SK-N-SH (cell line): ENCODE measurements at regions of chr6 and their contacts with region 1.

Region 1: DNA sequence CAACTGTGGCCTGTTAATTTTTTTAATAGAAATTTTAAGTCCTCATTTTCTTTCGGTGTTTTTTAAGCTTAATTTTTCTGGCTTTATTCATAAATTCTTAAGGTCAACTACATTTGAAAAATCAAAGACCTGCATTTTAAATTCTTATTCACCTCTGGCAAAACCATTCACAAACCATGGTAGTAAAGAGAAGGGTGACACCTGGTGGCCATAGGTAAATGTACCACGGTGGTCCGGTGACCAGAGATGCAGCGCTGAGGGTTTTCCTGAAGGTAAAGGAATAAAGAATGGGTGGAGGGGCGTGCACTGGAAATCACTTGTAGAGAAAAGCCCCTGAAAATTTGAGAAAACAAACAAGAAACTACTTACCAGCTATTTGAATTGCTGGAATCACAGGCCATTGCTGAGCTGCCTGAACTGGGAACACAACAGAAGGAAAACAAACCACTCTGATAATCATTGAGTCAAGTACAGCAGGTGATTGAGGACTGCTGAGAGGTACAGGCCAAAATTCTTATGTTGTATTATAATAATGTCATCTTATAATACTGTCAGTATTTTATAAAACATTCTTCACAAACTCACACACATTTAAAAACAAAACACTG is 10.1 kb downstream of the HFE start:
- DNase-seq: peak; percentile 65
- H3K4me3 ChIP-seq: no peak overlapping the region
- H3K27ac ChIP-seq: no peak overlapping the region
- H3K4me1 ChIP-seq: peaks cover 0 to under 1% of the 10 kb centered on the region in 2 experiments; a peak in 2 of 4 replicates
- H3K27me3 ChIP-seq: no peaks in the 10 kb centered on the region
- CTCF ChIP-seq: peak; percentile 85
- EP300 ChIP-seq: no peak
- RAD21 ChIP-seq: peak; percentile 84

Region 2: GRCh38 chr6:26054857-26055669 is 42.3 kb before region 1 on chr6:
- CTCF ChIA-PET with region 1: interaction called, 660 read pairs
- POLR2A ChIA-PET with region 1: no interaction called
- DNase-seq: peak; percentile 57
- H3K4me3 ChIP-seq: peak overlapping the region; percentile 79 to 80
- H3K27ac ChIP-seq: peak overlapping the region; percentile 97 to 98
- H3K4me1 ChIP-seq: peaks cover 0 to 7% of the 10 kb centered on the region in 2 experiments; a peak in 3 of 4 replicates
- H3K27me3 ChIP-seq: no peaks in the 10 kb centered on the region
- CTCF ChIP-seq: no peak
- EP300 ChIP-seq: no peak; a peak in 1 of 4 replicates
- RAD21 ChIP-seq: no peak